ENCODE measurements at regions of chr14 and their contacts with region 1.

Region 1: GRCh38 chr14:77151918-77152588 is 10.5 kb upstream of the ZDHHC22 start:
- DNase-seq: peak; percentile 31 to 66
- H3K4me3 ChIP-seq: no peak overlapping the region
- H3K27ac ChIP-seq: no peak overlapping the region
- H3K4me1 ChIP-seq: no peaks in the 10 kb centered on the region
- H3K27me3 ChIP-seq: peaks cover 52% of the 10 kb centered on the region
- CTCF ChIP-seq: peak; percentile 70

Region 2: GRCh38 chr14:76947078-76947837 is 204.8 kb before region 1 on chr14:
- CTCF ChIA-PET with region 1: interaction called, 11 read pairs
- POLR2A ChIA-PET with region 1: no interaction called
- intact Hi-C with region 1: no loop called
- DNase-seq: peak; percentile 95 to 100
- H3K4me3 ChIP-seq: peak overlapping the region; percentile 15; the same call in 1 of the 2 replicates
- H3K27ac ChIP-seq: peak overlapping the region; percentile 93
- H3K4me1 ChIP-seq: peaks cover 81% of the 10 kb centered on the region
- H3K27me3 ChIP-seq: no peaks in the 10 kb centered on the region
- CTCF ChIP-seq: peak; percentile 59; the same call in 1 of the 2 replicates

Region 3: GRCh38 chr14:77033622-77034521 is 118.2 kb before region 1 on chr14:
- CTCF ChIA-PET with region 1: interaction called, 17 read pairs
- POLR2A ChIA-PET with region 1: no interaction called
- intact Hi-C with region 1: no loop called
- DNase-seq: peak; percentile 94
- H3K4me3 ChIP-seq: peak overlapping the region; percentile 56
- H3K27ac ChIP-seq: peak overlapping the region; percentile 93
- H3K4me1 ChIP-seq: peaks cover 92% of the 10 kb centered on the region
- H3K27me3 ChIP-seq: no peaks in the 10 kb centered on the region
- CTCF ChIP-seq: peak; percentile 17; the same call in 1 of the 2 replicates

Region 4: DNA sequence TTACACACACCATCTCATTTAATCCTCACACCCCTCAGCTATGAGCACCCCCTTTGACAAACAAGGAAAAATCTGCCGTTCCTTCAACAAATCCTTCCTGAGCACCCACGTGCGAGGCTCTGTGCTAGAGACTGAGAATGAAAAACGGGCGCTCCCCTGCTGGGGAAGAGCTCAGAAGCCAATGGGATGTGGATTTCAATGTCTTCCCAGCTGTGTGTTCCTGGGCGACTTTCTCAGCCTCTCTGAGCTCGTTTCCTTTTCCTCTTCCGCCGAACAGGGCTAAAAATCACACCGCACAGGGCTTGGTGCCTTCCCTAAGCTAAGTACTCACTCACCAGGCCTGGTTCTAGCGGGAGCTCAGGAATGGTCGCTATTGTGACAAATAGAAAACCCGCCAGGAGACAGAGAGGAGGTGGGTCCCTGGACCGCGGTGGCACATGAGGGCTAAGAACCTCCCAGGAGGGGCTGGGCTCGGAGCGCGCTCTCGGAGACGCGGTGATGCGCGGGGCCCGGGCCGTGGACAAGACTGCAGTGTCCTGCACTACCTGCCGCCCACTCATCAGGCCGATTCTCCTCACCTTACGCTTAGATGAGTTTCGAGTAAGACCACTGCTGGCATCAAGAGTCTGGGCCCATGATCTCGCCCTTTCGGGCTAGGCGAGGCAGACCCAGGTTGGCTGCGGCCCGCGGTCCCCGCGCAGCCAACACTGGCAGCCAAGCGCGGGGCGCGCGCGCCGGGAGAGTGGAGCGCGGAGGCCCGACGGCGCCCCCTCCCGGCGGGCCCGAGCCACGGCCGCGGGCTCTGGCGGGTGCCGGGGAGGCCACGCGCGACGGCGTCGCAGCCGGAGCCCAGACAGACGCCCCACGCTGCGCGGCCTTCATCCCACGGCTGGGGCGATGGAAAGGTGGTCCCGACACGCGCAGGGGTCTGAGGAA is 27.4 kb before region 1 on chr14:
- CTCF ChIA-PET with region 1: interaction called, 12 read pairs
- POLR2A ChIA-PET with region 1: no interaction called
- intact Hi-C with region 1: no loop called
- DNase-seq: peak in 1 of 2 experiments; percentile 81
- H3K4me3 ChIP-seq: peak overlapping the region; percentile 31; the same call in 1 of the 2 replicates
- H3K27ac ChIP-seq: no peak overlapping the region
- H3K4me1 ChIP-seq: peaks cover 26% of the 10 kb centered on the region
- H3K27me3 ChIP-seq: peaks cover 51% of the 10 kb centered on the region
- CTCF ChIP-seq: peak; percentile 28; the same call in 1 of the 2 replicates

Region 5: GRCh38 chr14:77212943-77213678 is 61.1 kb after region 1 on chr14:
- CTCF ChIA-PET with region 1: interaction called, 12 read pairs
- POLR2A ChIA-PET with region 1: no interaction called
- intact Hi-C with region 1: loop called (anchors 1 kb)
- DNase-seq: peak; percentile 55 to 82
- H3K4me3 ChIP-seq: no peak overlapping the region
- H3K27ac ChIP-seq: no peak overlapping the region
- H3K4me1 ChIP-seq: no peaks in the 10 kb centered on the region
- H3K27me3 ChIP-seq: peaks cover 71% of the 10 kb centered on the region
- CTCF ChIP-seq: peak; percentile 90

Region 6: GRCh38 chr14:77554207-77554606 is 402.2 kb after region 1 on chr14:
- CTCF ChIA-PET with region 1: interaction called, 7 read pairs
- POLR2A ChIA-PET with region 1: no interaction called
- intact Hi-C with region 1: loop called (anchors 1 kb)
- DNase-seq: no peak
- H3K4me3 ChIP-seq: no peak overlapping the region
- H3K27ac ChIP-seq: no peak overlapping the region
- H3K4me1 ChIP-seq: no peaks in the 10 kb centered on the region
- H3K27me3 ChIP-seq: no peaks in the 10 kb centered on the region
- CTCF ChIP-seq: no peak

Region 7: GRCh38 chr14:77707724-77708408 is 555.8 kb after region 1 on chr14 and contains the starts of genes ALKBH1 and SLIRP:
- CTCF ChIA-PET with region 1: no interaction called
- POLR2A ChIA-PET with region 1: no interaction called
- intact Hi-C with region 1: loop called (anchors 10 kb)
- DNase-seq: peak; percentile 88 to 92
- H3K4me3 ChIP-seq: peak within 1 kb of the TSS; percentile 74
- H3K27ac ChIP-seq: peak within 1 kb of the TSS; percentile 27
- H3K4me1 ChIP-seq: peaks cover 25% of the 10 kb centered on the region
- H3K27me3 ChIP-seq: no peaks in the 10 kb centered on the region
- CTCF ChIP-seq: no peak; the same call in 1 of the 2 replicates
- total RNA-seq, gene ALKBH1: 22.7 and 25.0 TPM in 2 replicates
- total RNA-seq, gene SLIRP: 298 and 375 TPM in 2 replicates

Measured in PC-9 (cell line).